Mammary epithelial cell (primary cell): ENCODE measurements at regions of chr16 and their contacts with region 1.

Region 1: GRCh38 chr16:4846891-4847773 is at the starts of genes GLYR1 and UBN1:
- DNase-seq: peak; percentile 97
- H3K4me3 ChIP-seq: peak within 1 kb of the TSS; percentile 65 to 93 (median 89)
- H3K27ac ChIP-seq: peak within 1 kb of the TSS; percentile 83
- H3K4me1 ChIP-seq: peaks cover 34% of the 10 kb centered on the region
- H3K27me3 ChIP-seq: no peaks in the 10 kb centered on the region
- CTCF ChIP-seq: peak in 1 of 2 donors; percentile 1
- total RNA-seq, gene GLYR1: 38.0 to 67.7 TPM
- total RNA-seq, gene UBN1: 23.7 to 37.2 TPM

Region 2: GRCh38 chr16:4538350-4539235 is 308.5 kb before region 1 on chr16 and contains the start of gene CDIP1:
- CTCF ChIA-PET with region 1: no interaction called
- dilution Hi-C with region 1: no loop called
- in situ Hi-C with region 1: no loop called
- intact Hi-C with region 1: loop called (anchors 10 kb)
- DNase-seq: peak; percentile 95
- H3K4me3 ChIP-seq: peak within 1 kb of the TSS; percentile 80 to 84 (median 82)
- H3K27ac ChIP-seq: peak within 1 kb of the TSS; percentile 37
- H3K4me1 ChIP-seq: peaks cover 14% of the 10 kb centered on the region
- H3K27me3 ChIP-seq: no peaks in the 10 kb centered on the region
- CTCF ChIP-seq: peak in 1 of 2 donors; percentile 31
- total RNA-seq, gene CDIP1: 63.3 to 81.8 TPM

Region 3: DNA sequence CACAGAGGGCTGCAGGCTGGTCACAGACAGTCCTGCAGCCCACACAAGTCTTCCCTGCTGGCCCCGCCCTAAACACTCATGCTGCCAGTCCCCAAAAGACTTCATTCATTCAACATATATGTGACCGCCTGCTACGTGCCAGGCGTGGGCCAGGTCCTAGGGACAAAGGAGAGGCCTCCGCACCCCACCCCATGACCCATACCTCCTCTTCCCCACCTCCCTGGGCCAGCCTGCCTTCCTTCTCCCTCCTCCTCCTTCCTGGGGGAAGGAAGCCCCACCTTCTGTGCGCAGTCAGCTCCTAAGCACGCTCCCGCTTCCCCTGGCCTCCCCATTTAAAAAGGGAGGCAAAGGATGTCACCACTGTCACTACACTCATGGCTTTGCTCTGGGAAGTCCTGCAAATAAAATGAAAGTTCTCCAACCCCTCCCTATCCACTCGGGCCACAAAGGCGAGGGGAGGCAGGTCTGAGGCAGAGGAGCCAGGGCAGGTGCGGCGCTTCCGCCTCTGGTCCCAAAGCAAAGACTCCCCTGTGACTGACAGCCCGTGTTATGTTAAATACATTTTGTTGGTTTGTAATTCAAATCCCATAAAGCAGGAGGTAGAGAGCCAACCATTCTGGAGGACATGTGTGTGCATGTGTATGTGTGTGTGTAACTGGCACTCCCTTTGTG is 103.8 kb before region 1 on chr16:
- CTCF ChIA-PET with region 1: no interaction called
- dilution Hi-C with region 1: no loop called
- in situ Hi-C with region 1: no loop called
- intact Hi-C with region 1: no loop called
- DNase-seq: no peak
- H3K4me3 ChIP-seq: peak overlapping the region in 2 of 3 experiments; percentile 5 to 35
- H3K27ac ChIP-seq: no peak overlapping the region
- H3K4me1 ChIP-seq: peaks cover 7% of the 10 kb centered on the region
- H3K27me3 ChIP-seq: no peaks in the 10 kb centered on the region
- CTCF ChIP-seq: no peak

Region 4: GRCh38 chr16:4859900-4860255 is 12.7 kb after region 1 on chr16:
- CTCF ChIA-PET with region 1: no interaction called
- dilution Hi-C with region 1: no loop called
- in situ Hi-C with region 1: no loop called
- intact Hi-C with region 1: no loop called
- DNase-seq: peak; percentile 76
- H3K4me3 ChIP-seq: no peak overlapping the region
- H3K27ac ChIP-seq: peak overlapping the region; percentile 74
- H3K4me1 ChIP-seq: peaks cover 37% of the 10 kb centered on the region
- H3K27me3 ChIP-seq: no peaks in the 10 kb centered on the region
- CTCF ChIP-seq: no peak

Region 5: DNA sequence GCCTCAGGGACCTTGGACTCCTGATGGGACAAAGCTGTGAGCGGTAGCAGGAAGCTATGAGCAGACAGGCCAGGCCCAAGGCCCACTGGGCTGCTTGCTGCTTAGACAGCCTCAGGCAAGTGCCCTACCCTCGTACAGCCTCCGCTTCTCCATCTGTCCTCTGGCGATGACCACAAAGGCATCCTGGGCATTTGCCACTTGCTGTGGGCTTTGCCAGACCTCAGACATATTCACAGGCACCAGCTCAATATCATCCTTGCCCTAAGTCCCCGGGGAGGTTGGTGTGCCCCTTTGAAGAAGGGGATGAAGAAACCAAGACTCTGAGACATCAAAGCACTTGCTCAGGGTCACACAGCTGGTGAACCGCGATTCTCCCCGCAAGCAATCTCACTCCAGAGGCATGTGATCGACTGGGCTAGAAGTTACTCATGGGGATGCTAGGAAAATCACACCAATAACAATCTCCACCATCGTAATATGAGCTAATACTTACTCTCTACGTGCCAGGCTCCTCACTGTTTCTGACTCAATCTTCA is 68.2 kb after region 1 on chr16:
- CTCF ChIA-PET with region 1: no interaction called
- dilution Hi-C with region 1: no loop called
- in situ Hi-C with region 1: no loop called
- intact Hi-C with region 1: no loop called
- DNase-seq: peak; percentile 92
- H3K4me3 ChIP-seq: no peak overlapping the region
- H3K27ac ChIP-seq: no peak overlapping the region
- H3K4me1 ChIP-seq: peaks cover 21% of the 10 kb centered on the region
- H3K27me3 ChIP-seq: no peaks in the 10 kb centered on the region
- CTCF ChIP-seq: no peak

Region 6: GRCh38 chr16:4944333-4945281 is 97.5 kb after region 1 on chr16:
- CTCF ChIA-PET with region 1: no interaction called
- dilution Hi-C with region 1: no loop called
- in situ Hi-C with region 1: no loop called
- intact Hi-C with region 1: loop called (anchors 2 kb)
- DNase-seq: peak; percentile 95
- H3K4me3 ChIP-seq: no peak overlapping the region
- H3K27ac ChIP-seq: peak overlapping the region; percentile 81
- H3K4me1 ChIP-seq: peaks cover 38% of the 10 kb centered on the region
- H3K27me3 ChIP-seq: no peaks in the 10 kb centered on the region
- CTCF ChIP-seq: no peak